ENCODE measurements at regions of chr19 and their contacts with region 1.

Region 1: GRCh38 chr19:18160971-18161635 is 8.1 kb downstream of the PIK3R2 start:
- DNase-seq: peak; percentile 92

Region 2: DNA sequence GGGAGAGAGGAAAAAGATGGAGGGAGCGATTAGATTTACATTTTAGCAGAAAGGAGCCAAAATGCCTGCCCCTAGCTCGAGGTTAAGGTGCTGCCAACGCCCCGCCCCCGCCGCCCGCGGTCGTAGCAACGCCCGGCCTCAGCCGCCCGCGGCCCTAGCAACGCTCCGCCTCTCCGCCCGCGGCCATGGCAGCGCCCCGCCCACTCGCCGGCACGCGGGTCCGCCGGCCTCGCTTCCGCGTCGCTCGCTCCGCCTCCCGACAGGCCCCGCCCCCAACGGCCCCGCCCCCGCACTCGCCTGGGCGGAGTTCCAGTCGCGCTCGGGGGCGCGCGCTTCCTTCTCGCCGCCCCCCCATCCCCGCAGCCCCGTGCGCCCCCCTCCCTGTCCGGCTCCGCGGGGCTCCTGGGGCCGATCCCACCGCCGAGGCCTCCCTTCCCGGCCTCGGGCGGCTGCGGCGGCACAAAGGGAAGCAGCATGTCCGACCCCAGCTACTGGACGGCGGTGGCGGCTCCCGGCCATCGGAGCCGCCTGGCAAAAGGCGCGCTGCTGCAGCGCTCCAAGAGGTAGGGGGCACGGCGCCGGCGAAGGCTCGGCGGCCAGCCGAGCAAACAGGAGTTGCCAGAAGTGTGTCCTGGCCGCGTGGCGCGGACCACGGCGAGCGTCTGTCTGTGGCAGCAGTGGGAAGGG is 43.3 kb before region 1 on chr19:
- intact Hi-C with region 1: loop called (anchors 2 to 5 kb)
- DNase-seq: peak; percentile 97

Region 3: DNA sequence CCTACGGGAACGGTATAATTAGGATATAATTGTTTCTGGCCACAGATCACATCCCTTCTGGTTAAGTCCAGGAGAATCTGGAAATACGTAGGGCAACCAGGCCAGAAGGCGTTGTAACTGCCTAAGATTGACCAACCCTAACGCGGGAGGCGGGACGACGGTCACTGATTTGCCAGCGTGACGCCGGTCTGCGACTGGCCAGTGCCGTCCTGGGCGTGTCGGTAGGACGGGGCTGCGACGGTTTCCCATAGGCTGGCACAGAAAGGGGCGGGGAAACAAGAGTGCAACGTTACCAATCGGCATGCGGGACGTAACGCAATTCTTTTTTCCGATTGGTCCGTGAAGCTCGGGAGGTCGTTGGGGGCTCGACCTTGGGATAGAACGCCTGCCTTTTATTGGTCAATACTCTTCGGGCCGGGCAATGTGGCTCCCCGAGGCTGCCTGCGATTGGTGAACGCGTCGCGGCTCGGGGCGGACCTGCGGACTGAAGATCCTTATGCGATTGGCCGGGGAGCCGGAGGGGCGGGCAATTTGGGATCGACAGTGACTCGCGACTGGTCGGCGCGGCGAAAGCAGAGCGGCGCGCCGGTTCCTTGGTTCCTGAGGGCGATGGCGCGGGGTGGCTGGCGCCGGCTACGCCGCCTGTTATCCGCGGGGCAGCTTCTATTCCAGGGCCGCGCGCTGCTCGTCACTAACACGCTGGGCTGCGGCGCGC is 31.7 kb after region 1 on chr19 and contains the start of gene MPV17L2:
- intact Hi-C with region 1: no loop called
- DNase-seq: peak; percentile 100
- total RNA-seq, gene MPV17L2: 6.1 to 6.6 TPM

Region 4: DNA sequence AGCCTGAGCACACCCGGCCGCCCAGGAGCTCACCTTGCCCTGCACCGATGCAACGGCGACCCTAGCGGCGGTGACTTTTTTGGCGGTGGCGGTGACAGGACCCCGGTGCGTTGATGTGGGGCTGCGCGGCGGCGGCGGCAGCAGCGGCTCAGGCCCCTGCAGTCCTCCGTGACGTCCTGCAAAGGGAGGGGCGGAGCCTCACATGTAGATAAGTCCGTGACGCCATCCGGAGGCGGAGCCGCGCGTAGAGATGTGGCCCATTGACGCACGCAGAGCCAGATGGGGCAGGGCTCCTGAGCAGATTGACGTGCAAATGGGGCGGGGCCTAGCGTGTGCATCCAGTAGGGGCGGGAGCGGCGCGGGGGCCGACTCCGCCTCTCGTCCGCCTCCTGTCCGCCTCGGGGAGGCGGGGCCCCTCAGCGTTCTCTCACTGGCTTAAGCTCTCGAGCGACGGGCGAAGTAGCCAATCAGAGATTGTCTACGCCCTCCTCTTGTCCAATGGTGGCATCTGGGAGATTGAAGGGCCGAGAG is 42.8 kb after region 1 on chr19 and contains the start of gene RAB3A:
- intact Hi-C with region 1: no loop called
- DNase-seq: peak; percentile 100
- total RNA-seq, gene RAB3A: 1.9 to 2.9 TPM